ENCODE measurements at regions of chr15 and their contacts with region 1.

Region 1: GRCh38 chr15:40525855-40526254 is 39.0 kb downstream of the CCDC32 start:
- DNase-seq: no peak
- H3K4me3 ChIP-seq: no peak overlapping the region
- CTCF ChIP-seq: no peak

Region 2: GRCh38 chr15:40506964-40507571 is 18.8 kb before region 1 on chr15:
- CTCF ChIA-PET with region 1: interaction called, 35 read pairs
- POLR2A ChIA-PET with region 1: no interaction called
- DNase-seq: no peak
- H3K4me3 ChIP-seq: peak overlapping the region; percentile 43
- CTCF ChIP-seq: peak; percentile 89

Region 3: DNA sequence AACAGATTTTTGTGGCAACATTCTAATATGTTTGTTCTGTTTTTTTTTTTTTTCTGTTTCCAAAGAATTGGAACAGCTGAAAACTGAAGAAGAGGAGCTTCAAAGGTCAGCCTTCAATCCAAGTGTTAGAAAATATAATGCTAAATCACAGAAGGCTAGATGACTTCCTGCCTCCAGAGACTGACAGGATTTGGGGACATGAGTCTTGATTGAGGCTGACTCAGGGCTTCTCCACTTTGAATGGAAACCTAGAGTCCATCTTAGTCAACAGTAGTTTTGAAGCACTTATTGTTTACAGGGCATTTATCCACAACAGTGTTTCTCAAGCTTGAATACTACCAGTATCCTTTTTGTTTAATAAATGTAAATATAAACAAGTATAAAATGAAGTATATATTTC is 124.6 kb after region 1 on chr15:
- CTCF ChIA-PET with region 1: no interaction called
- POLR2A ChIA-PET with region 1: no interaction called
- DNase-seq: no peak
- H3K4me3 ChIP-seq: no peak overlapping the region
- CTCF ChIP-seq: no peak

Region 4: DNA sequence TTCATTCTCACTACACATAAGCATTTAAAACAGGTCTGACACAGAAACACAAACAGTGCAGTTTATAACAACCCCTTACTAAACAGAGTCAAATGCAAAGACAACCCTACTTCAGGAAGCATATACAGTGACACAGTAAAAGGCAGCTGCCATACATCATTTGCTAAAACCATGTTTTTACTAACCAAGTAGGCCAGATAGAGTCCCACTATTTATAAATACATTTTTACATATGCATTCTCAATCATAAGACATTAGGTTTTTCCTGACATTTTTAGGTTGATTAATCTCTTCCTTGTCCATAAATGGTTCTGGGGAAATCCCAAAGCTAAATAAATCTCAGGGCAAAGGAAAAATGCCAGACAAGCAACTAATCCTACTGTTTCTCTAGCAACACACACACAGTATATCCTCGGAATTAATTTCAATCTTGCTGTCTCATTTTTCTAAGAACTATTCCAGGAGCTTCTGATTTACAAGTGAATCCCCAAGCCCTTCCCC is 466.4 kb after region 1 on chr15:
- CTCF ChIA-PET with region 1: no interaction called
- POLR2A ChIA-PET with region 1: no interaction called
- DNase-seq: no peak
- H3K4me3 ChIP-seq: no peak overlapping the region
- CTCF ChIP-seq: no peak